ENCODE measurements at regions of chr3 and their contacts with region 1.

Region 1: DNA sequence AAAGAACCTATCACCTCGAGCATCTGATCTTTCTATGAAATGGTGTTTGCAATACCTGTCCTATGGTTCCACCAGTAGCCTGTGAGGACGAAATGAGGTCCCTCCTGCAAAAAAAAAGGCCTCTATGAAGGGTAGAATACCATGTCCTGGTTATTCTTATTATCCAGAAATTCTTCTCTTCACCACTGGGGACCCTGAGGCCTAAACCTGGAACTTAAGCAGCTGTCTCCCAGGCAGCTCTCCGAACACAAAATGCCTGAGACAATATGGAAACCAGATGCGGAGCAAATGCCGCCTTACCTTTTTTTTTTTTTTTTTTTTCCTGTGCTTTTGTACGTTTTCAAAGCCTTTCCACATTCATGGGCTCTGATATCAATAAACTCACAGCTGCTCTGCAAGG is 62.1 kb upstream of the WNT5A start:
- DNase-seq: peak; percentile 23
- H3K4me3 ChIP-seq: no peak overlapping the region
- H3K27me3 ChIP-seq: peaks cover 4% of the 10 kb centered on the region
- CTCF ChIP-seq: peak; percentile 56

Region 2: DNA sequence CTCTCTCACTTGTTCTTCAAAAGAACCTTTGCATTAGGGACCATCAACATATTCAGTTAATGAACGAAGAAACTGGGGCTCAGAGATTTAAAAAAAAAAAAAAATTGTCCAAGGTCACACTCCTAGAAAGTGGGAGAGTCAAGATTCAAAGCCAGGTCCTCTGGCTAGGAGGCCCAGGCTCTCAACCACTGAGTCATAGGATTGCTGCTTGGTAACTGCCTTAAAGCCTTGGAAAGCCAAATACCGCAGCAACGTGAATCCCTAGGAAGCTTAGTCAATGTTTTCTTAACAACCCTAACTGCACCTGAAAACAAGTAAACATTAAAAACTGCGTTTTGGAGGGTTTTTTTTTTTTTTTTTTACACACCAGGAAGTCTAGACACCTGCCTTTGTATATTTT is 218.8 kb before region 1 on chr3:
- CTCF ChIA-PET with region 1: no interaction called
- POLR2A ChIA-PET with region 1: no interaction called
- DNase-seq: peak; percentile 94
- H3K4me3 ChIP-seq: no peak overlapping the region
- H3K27me3 ChIP-seq: no peaks in the 10 kb centered on the region
- CTCF ChIP-seq: no peak

Region 3: DNA sequence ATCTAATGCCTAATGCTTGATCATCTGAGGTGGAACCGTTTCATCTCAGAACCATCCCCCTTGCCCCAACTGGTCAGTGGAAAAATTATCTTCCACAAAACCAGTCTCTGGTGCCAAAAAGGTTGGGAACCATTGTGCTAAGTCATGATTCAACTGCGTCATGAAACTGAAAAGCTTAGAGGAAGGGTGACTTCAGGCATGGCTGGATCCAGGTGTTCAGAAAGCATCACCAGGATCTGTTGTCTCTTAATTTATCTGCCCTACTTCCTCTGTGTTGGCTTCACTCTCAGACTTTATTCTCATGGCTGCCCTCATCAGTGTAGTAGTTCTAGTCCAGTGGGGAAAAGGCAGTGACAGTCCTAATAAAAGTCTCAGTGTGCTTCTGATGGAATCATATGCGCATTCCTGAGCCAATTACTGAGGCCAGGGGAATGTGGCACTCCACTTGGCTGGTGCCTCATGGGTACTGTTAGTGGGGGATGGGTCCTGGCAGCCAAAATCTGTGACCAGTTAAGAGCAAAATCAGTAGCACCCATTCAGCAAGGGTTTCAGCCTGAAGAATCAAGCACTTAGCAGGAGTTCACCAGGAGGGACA is 172.3 kb before region 1 on chr3:
- CTCF ChIA-PET with region 1: no interaction called
- POLR2A ChIA-PET with region 1: no interaction called
- DNase-seq: no peak
- H3K4me3 ChIP-seq: no peak overlapping the region
- H3K27me3 ChIP-seq: no peaks in the 10 kb centered on the region
- CTCF ChIP-seq: no peak

Region 4: GRCh38 chr3:55426486-55426885 is 122.7 kb before region 1 on chr3:
- CTCF ChIA-PET with region 1: no interaction called
- POLR2A ChIA-PET with region 1: no interaction called
- DNase-seq: no peak
- H3K4me3 ChIP-seq: no peak overlapping the region
- H3K27me3 ChIP-seq: no peaks in the 10 kb centered on the region
- CTCF ChIP-seq: no peak

Region 5: GRCh38 chr3:55524565-55525244 is 24.5 kb before region 1 on chr3:
- CTCF ChIA-PET with region 1: interaction called, 16 read pairs
- POLR2A ChIA-PET with region 1: no interaction called
- DNase-seq: no peak
- H3K4me3 ChIP-seq: no peak overlapping the region
- H3K27me3 ChIP-seq: no peaks in the 10 kb centered on the region; the same call in 1 of the 2 replicates
- CTCF ChIP-seq: no peak

Region 6: DNA sequence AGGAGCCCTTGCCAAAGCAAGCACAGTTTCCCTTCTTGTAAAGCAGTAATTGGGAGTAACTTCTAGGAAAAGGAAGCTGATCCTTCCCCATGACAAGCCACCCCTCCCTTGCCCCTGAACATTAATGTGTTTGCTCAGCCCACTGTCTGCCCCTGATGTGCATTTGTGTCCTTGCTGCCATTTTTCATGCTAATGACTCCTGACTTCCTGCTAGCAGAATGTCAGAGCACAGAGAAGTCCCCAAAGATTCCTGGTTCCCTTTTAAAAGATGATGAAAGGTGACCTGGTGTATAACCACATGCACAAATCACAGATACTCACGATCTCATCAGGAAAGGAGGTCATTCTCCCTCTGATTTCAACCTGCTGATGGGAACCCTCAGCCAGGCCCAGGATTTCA is 17.9 kb before region 1 on chr3:
- CTCF ChIA-PET with region 1: interaction called, 11 read pairs
- POLR2A ChIA-PET with region 1: no interaction called
- DNase-seq: no peak
- H3K4me3 ChIP-seq: no peak overlapping the region
- H3K27me3 ChIP-seq: peaks cover 1% of the 10 kb centered on the region; the same call in 1 of the 2 replicates
- CTCF ChIP-seq: no peak

Region 7: GRCh38 chr3:55538158-55538557 is 11.0 kb before region 1 on chr3:
- CTCF ChIA-PET with region 1: interaction called, 11 read pairs
- POLR2A ChIA-PET with region 1: no interaction called
- DNase-seq: no peak
- H3K4me3 ChIP-seq: no peak overlapping the region
- H3K27me3 ChIP-seq: peaks cover 3% of the 10 kb centered on the region
- CTCF ChIP-seq: no peak

Measured in BJ (cell line).